ENCODE measurements at regions of chr14 and their contacts with region 1.

Region 1: GRCh38 chr14:81436296-81437138 is 36.4 kb upstream of the STON2 start:
- DNase-seq: peak; percentile 84
- ATAC-seq: peak; percentile 90
- H3K4me3 Mint-ChIP-seq: peak overlapping the region; percentile 81
- H3K27ac Mint-ChIP-seq: no peak overlapping the region
- H3K4me1 Mint-ChIP-seq: peaks cover 44% of the 10 kb centered on the region
- H3K27me3 Mint-ChIP-seq: peaks cover 31% of the 10 kb centered on the region
- CTCF ChIP-seq: no peak

Region 2: DNA sequence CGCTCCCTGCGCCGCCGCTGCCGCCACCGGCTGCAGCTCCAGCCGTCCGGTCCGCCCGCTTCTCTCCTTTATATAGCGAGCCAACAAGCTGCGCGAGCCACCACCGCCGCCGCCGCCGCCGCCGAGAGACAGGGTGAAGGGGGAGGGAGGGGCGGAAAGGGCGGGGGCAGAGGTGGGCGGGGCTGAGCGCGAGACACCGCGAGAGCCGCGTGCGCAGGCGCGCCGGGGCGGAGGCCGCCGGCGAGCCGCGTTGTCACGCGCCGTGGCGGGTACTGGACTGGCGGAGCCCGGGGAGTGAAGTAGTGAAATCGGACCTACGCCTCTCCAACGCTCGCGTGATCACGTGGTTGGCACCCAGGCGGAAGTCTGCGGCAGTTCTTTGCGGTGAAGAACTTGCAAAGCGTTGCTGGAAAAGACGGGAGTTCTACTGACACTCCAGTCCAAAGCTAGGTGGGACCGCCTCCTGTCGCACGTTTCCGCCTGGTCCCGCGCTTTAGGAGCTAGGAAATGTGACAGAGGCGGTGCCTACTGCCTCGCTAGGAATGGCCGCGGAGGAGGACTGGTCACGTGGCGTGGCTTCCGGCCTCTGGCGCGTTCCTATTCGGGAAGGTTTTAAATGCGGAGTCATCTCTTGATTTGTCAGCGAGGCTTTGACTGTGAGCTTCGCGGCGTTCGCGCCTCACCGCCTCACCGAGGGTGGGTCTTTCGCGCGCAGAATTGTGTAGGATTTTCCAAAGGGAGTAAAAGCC is 215.5 kb before region 1 on chr14 and contains the start of gene GTF2A1:
- CTCF ChIA-PET with region 1: interaction called, 4 read pairs
- POLR2A ChIA-PET with region 1: interaction called, 18 read pairs
- DNase-seq: peak; percentile 90
- ATAC-seq: peak; percentile 81
- H3K4me3 Mint-ChIP-seq: peak within 1 kb of the TSS; percentile 96
- H3K27ac Mint-ChIP-seq: peak within 1 kb of the TSS; percentile 99
- H3K4me1 Mint-ChIP-seq: peaks cover 31% of the 10 kb centered on the region
- H3K27me3 Mint-ChIP-seq: peaks cover 4% of the 10 kb centered on the region; the same call in 1 of the 2 replicates
- CTCF ChIP-seq: no peak
- total RNA-seq, gene GTF2A1: 44.3 to 49.0 TPM (median 45.2 TPM) in 3 replicates

Region 3: GRCh38 chr14:81453166-81453766 is 16.7 kb after region 1 on chr14:
- CTCF ChIA-PET with region 1: interaction called, 14 read pairs
- POLR2A ChIA-PET with region 1: interaction called, 7 read pairs
- DNase-seq: peak; percentile 62
- ATAC-seq: peak; percentile 66
- H3K4me3 Mint-ChIP-seq: peak overlapping the region; percentile 29
- H3K27ac Mint-ChIP-seq: no peak overlapping the region
- H3K4me1 Mint-ChIP-seq: peaks cover 30% of the 10 kb centered on the region
- H3K27me3 Mint-ChIP-seq: peaks cover 4% of the 10 kb centered on the region; the same call in 1 of the 2 replicates
- CTCF ChIP-seq: peak; percentile 81

Measured in WTC11 (cell line).